Activated CD4-positive, alpha-beta T cell treated with anti-CD3 and anti-CD28 coated beads for 36 hours (primary cell): ENCODE measurements at regions of chr15 and their contacts with region 1.

Region 1: DNA sequence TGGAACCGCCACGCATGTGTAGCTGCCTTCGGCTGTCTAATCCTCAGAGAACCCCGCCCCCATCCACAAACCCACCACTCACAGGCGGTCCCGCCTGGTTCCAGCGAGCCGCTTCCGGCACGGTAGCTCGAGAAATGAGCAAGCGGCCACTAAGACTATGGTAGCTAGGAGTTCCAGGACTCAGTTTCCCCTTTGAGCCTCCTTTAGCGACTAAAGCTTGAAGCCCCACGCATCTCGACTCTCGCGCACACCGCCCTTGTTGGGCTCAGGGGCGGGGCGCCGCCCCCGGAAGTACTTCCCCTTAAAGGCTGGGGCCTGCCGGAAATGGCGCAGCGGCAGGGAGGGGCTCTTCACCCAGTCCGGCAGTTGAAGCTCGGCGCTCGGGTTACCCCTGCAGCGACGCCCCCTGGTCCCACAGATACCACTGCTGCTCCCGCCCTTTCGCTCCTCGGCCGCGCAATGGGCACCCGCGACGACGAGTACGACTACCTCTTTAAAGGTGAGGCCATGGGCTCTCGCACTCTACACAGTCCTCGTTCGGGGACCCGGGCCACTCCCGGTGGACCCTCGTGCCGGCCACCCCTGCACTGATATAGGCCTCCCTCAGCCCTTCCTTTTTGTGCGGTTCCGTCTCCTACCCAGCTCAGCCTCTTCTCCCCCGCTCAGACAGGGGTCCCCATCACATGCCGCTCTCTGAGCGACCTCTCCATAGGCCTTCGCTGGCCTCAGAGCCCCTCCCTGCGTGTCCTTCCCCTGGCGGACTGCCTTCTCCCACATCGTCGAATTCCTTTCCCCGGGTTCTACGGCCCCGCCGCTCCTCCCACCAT is at the start of gene RAB11A:
- DNase-seq: peak; percentile 97
- ATAC-seq: peak; percentile 92
- H3K4me3 Mint-ChIP-seq: peak within 1 kb of the TSS; percentile 99
- H3K27ac Mint-ChIP-seq: peak within 1 kb of the TSS; percentile 91
- H3K4me1 Mint-ChIP-seq: peaks cover 30% of the 10 kb centered on the region
- H3K27me3 Mint-ChIP-seq: no peaks in the 10 kb centered on the region
- total RNA-seq, gene RAB11A: 129 to 142 TPM

Region 2: GRCh38 chr15:65610871-65611718 is 258.2 kb before region 1 on chr15 and contains the start of gene INTS14:
- CTCF ChIA-PET with region 1: interaction called, 3 read pairs
- POLR2A ChIA-PET with region 1: interaction called, 5 read pairs
- intact Hi-C with region 1: loop called in 1 of 2 experiments (anchors 1 kb)
- DNase-seq: peak; percentile 98
- ATAC-seq: peak; percentile 99
- H3K4me3 Mint-ChIP-seq: peak within 1 kb of the TSS; percentile 97
- H3K27ac Mint-ChIP-seq: peak within 1 kb of the TSS; percentile 96
- H3K4me1 Mint-ChIP-seq: peaks cover 33% of the 10 kb centered on the region
- H3K27me3 Mint-ChIP-seq: no peaks in the 10 kb centered on the region
- total RNA-seq, gene INTS14: 49.2 to 59.8 TPM

Region 3: DNA sequence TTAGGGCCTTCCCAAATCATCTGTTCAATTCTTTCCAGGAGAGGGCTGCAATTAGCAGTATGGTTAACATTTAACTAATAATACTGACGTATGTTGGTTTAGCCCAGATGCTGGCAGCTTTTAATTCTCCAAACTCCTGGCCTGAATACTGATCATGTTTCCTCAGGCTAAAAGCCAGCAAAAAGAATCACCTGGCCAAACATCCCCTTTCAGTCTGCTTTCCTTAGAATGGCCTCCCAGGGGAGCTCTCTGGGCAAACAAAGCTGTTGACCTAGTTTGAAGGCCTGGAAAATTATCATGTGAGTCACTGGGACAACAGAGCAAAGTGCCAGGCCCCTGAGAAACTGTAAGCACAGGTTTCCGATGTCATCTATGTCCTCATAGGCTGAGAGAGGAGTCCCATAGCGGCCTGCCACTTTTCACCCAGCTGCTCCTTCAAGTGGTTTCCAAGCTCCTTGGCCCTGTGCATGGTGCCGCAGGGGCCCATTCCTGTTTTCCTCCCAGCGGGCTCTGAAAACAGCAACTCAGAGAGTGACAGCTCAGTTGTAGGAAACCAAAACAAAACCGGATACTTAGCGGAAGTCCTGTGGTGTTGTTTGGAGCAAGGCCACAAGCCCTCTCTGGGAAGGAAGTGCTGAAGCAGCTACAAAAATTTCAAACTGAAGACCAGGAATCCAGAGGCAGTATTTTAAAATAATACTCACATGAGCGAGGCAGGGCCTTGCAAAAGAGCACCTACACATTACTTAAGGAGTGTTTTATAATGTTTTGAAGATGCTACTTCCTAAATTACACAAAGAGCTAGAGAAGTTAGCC is 36.6 kb before region 1 on chr15:
- CTCF ChIA-PET with region 1: interaction called, 5 read pairs
- POLR2A ChIA-PET with region 1: interaction called, 5 read pairs
- intact Hi-C with region 1: loop called in 1 of 2 experiments (anchors 5 kb)
- DNase-seq: peak; percentile 67
- ATAC-seq: peak; percentile 62
- H3K4me3 Mint-ChIP-seq: peak overlapping the region; percentile 66
- H3K27ac Mint-ChIP-seq: peak overlapping the region; percentile 93
- H3K4me1 Mint-ChIP-seq: peaks cover 50% of the 10 kb centered on the region
- H3K27me3 Mint-ChIP-seq: no peaks in the 10 kb centered on the region

Region 4: DNA sequence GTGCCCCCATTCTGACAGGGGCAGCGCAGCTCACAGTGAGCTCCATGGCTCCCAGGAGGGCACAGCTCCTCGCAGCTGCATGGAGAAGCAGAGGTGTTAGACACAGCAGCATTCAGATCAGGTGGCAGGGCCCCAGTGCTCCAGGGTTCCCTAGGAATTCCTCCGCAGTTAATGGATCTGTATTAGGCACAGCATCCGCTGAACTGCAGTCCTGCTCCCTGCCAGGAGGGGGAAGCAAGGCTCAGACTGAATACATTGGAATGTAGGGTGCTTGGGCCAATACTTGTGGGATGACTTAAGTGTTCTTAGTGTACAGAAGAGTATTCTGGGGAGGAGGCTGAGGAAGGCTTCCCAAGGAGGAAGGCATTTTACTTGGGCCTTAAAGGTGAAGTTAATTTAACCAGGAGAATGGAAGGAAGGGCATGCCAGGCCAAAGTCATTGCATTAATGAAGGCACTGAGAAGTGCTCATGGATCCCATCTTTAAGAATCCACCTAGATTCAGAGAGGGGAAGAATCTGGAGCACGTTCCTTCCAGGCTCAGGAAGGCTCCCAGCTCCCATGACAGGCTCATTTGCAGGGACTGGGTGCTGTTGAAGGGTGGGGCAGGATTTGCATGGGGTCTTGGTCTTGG is 111.6 kb after region 1 on chr15:
- CTCF ChIA-PET with region 1: no interaction called
- POLR2A ChIA-PET with region 1: no interaction called
- intact Hi-C with region 1: loop called in 1 of 2 experiments (anchors 2 kb)
- DNase-seq: peak; percentile 48
- ATAC-seq: no peak
- H3K4me3 Mint-ChIP-seq: no peak overlapping the region
- H3K27ac Mint-ChIP-seq: no peak overlapping the region
- H3K4me1 Mint-ChIP-seq: peaks cover 7% of the 10 kb centered on the region
- H3K27me3 Mint-ChIP-seq: peaks cover 24% of the 10 kb centered on the region

Region 5: DNA sequence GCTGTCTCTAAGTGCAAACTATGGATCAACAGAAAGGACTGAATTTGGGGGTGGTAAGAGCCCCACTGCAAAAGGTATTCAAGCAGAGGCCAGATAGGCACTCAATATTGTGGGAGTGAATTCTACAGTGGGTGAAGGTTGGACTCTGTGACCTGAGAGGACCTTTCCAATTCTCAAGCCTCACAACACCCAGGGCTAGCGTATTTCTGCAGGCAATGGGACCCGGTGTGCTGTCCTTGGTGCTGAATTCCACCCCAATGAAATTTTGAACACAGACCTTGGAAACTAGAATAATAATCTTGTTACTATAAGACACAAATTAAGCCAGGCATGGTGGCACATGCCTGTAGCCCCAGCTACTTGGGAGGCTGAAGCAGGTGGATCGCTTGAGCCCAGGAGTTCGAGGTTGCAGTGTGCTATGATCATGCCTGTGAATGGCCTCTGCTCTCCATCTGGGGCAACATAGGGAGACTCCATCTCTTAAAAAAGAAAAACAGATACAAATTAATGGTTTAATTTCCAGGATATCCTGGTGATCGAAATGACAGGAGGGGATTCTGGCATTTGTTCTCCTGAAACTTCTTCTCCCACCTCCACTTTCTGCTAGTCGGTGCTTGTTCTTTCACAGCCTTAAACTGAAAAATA is 135.4 kb after region 1 on chr15:
- CTCF ChIA-PET with region 1: no interaction called
- POLR2A ChIA-PET with region 1: no interaction called
- intact Hi-C with region 1: no loop called
- DNase-seq: peak; percentile 40
- ATAC-seq: no peak
- H3K4me3 Mint-ChIP-seq: no peak overlapping the region
- H3K27ac Mint-ChIP-seq: no peak overlapping the region
- H3K4me1 Mint-ChIP-seq: no peaks in the 10 kb centered on the region
- H3K27me3 Mint-ChIP-seq: peaks cover 16% of the 10 kb centered on the region

Region 6: DNA sequence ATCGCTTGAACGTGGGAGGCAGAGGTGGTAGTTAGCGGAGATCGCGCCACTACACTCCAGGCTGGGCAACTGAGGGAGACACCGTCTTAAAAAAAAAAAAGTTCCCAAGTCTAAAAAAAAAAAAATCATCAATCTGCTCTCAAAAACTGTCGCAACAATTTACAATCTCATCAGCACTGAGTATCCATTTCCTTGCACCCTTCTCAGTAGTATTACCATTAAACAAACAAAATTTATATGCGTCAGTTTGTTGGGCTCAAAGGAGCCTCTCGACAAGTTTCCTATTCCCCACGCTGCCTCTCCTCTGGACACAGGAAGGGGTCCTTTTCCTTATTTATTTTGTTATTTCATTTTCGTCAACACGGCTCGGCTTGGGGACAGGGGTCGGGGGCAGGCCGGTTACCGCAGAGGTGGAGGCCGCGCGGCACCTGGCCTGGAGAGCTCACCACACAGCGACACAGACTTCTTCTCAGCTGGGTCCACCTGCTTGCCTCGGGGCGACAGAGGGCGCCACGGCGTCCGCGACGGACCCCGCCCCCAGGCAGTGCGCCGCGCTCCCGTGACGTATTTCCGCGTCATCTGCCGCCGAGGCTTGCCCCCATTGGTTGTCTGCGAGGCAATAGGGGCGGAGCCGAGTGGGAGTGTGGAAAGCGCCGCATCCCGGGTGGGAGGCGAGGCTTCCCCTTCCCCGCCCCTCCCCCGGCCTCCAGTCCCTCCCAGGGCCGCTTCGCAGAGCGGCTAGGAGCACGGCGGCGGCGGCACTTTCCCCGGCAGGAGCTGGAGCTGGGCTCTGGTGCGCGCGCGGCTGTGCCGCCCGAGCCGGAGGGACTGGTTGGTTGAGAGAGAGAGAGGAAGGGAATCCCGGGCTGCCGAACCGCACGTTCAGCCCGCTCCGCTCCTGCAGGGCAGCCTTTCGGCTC is 517.1 kb after region 1 on chr15 and contains the start of gene MAP2K1:
- CTCF ChIA-PET with region 1: no interaction called
- POLR2A ChIA-PET with region 1: no interaction called
- intact Hi-C with region 1: loop called in 1 of 2 experiments (anchors 2 kb)
- DNase-seq: peak; percentile 99
- ATAC-seq: peak; percentile 84
- H3K4me3 Mint-ChIP-seq: peak within 1 kb of the TSS; percentile 95
- H3K27ac Mint-ChIP-seq: peak within 1 kb of the TSS; percentile 100
- H3K4me1 Mint-ChIP-seq: peaks cover 44% of the 10 kb centered on the region
- H3K27me3 Mint-ChIP-seq: no peaks in the 10 kb centered on the region
- total RNA-seq, gene MAP2K1: 94.9 to 115 TPM

Region 7: GRCh38 chr15:67456677-67457529 is 1587.6 kb after region 1 on chr15:
- CTCF ChIA-PET with region 1: no interaction called
- POLR2A ChIA-PET with region 1: no interaction called
- intact Hi-C with region 1: no loop called
- DNase-seq: peak; percentile 92
- ATAC-seq: peak; percentile 86
- H3K4me3 Mint-ChIP-seq: no peak overlapping the region
- H3K27ac Mint-ChIP-seq: no peak overlapping the region
- H3K4me1 Mint-ChIP-seq: no peaks in the 10 kb centered on the region
- H3K27me3 Mint-ChIP-seq: peaks cover 2% of the 10 kb centered on the region